ENCODE measurements at regions of chr3 and their contacts with region 1.

Region 1: DNA sequence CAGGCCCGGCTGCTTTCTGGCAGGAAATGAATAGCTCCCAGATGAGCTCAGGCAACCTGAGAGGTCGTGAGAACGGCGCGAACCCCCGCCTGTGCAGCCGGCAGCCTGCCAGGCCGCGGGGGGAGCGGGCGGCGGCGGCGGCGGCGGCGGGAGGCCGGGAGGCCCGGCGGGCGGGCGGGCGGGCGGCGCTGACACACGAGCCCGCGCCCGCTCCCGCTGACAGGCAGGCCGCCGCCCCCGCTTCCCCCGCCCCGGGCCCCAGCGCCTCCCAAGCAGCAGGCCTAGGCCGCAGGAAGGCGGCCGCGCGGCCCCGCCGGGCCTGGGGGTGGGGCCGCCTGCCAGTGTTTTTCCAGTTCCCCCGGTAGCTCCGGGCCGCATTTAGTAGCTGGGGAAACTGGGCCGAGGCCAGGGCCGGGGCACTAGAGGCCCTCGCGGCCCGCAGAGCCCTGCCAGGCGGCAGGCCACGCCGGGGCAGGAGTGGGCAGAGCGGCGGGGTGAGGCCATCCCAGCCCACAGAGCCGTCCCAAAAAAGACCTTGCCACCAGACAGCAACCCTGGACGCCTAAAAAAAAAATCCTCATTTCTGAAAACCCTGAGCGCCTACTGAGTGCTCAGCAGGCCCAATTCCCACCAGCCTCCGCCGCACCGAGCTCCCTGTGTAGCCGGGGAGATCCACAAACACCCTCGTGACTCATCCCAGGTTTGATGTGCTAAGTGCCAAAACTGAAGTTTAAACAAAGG is 5.6 kb downstream of the HES1 start:
- DNase-seq: peak in 8 of 9 experiments; percentile 19 to 70 (median 54)
- ATAC-seq: peak; percentile 53
- H3K4me3 ChIP-seq: peak overlapping the region in 1 of 2 experiments; percentile 28
- H3K4me3 Mint-ChIP-seq: peak overlapping the region; percentile 75
- H3K27ac ChIP-seq: no peak overlapping the region
- H3K27ac Mint-ChIP-seq: no peak overlapping the region
- H3K4me1 ChIP-seq: peaks cover 27% of the 10 kb centered on the region
- H3K4me1 Mint-ChIP-seq: peaks cover 24% of the 10 kb centered on the region
- H3K27me3 ChIP-seq: peaks cover 20 to 22% of the 10 kb centered on the region in 2 experiments
- H3K27me3 Mint-ChIP-seq: peaks cover 50% of the 10 kb centered on the region
- CTCF ChIP-seq: no peak

Region 2: DNA sequence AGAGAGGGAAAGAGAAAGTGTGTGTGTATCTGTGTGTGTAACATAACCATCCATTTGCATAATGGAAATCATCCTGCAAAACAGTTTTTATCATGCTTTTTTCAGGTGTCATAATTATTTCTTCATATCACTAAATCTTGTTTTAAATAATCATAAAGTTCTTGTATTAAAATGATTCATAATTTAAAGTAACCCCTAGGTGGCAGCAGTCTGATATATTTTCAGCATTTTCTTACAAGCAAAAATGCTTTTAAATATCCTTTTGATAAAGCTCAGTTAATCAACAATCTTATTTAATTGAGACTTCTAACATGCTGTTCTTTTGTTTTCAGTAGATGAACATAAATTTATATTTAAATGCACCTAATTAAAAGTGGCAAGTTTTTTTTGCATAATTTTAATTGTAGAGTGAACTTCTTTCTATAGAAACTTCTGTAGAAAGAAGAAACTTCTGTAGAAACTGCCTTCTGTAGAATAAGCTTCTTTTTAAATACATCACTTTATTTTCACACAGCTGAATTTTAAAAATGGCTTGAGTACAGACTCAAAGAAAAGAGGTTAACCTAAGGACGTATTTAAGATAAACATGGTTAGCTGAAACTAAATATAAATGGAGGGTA is 476.1 kb before region 1 on chr3:
- CTCF ChIA-PET with region 1: interaction called, 3 read pairs
- POLR2A ChIA-PET with region 1: no interaction called
- intact Hi-C with region 1: loop called (anchors 2 to 5 kb)
- DNase-seq: peak in 2 of 9 experiments; percentile 34 to 53
- ATAC-seq: no peak
- H3K4me3 ChIP-seq: no peak overlapping the region
- H3K4me3 Mint-ChIP-seq: no peak overlapping the region
- H3K27ac ChIP-seq: no peak overlapping the region
- H3K27ac Mint-ChIP-seq: no peak overlapping the region
- H3K4me1 ChIP-seq: no peaks in the 10 kb centered on the region
- H3K4me1 Mint-ChIP-seq: no peaks in the 10 kb centered on the region
- H3K27me3 ChIP-seq: no peaks in the 10 kb centered on the region
- H3K27me3 Mint-ChIP-seq: no peaks in the 10 kb centered on the region
- CTCF ChIP-seq: peak; percentile 76

Region 3: GRCh38 chr3:194070634-194071409 is 70.8 kb before region 1 on chr3:
- CTCF ChIA-PET with region 1: no interaction called
- POLR2A ChIA-PET with region 1: no interaction called
- intact Hi-C with region 1: loop called in 1 of 2 experiments (anchors 2 kb)
- DNase-seq: peak; percentile 21 to 82 (median 59)
- ATAC-seq: peak; percentile 74
- H3K4me3 ChIP-seq: peak overlapping the region; percentile 35 to 57
- H3K4me3 Mint-ChIP-seq: peak overlapping the region; percentile 77
- H3K27ac ChIP-seq: no peak overlapping the region
- H3K27ac Mint-ChIP-seq: no peak overlapping the region
- H3K4me1 ChIP-seq: peaks cover 4% of the 10 kb centered on the region
- H3K4me1 Mint-ChIP-seq: peaks cover 3% of the 10 kb centered on the region
- H3K27me3 ChIP-seq: peaks cover 0 to 6% of the 10 kb centered on the region in 2 experiments
- H3K27me3 Mint-ChIP-seq: peaks cover 12% of the 10 kb centered on the region
- CTCF ChIP-seq: no peak

Measured in CD8-positive, alpha-beta T cell (primary cell).